Left lung (tissue), 14 donors: ENCODE measurements at regions of chr17 and their contacts with region 1.

Region 1: DNA sequence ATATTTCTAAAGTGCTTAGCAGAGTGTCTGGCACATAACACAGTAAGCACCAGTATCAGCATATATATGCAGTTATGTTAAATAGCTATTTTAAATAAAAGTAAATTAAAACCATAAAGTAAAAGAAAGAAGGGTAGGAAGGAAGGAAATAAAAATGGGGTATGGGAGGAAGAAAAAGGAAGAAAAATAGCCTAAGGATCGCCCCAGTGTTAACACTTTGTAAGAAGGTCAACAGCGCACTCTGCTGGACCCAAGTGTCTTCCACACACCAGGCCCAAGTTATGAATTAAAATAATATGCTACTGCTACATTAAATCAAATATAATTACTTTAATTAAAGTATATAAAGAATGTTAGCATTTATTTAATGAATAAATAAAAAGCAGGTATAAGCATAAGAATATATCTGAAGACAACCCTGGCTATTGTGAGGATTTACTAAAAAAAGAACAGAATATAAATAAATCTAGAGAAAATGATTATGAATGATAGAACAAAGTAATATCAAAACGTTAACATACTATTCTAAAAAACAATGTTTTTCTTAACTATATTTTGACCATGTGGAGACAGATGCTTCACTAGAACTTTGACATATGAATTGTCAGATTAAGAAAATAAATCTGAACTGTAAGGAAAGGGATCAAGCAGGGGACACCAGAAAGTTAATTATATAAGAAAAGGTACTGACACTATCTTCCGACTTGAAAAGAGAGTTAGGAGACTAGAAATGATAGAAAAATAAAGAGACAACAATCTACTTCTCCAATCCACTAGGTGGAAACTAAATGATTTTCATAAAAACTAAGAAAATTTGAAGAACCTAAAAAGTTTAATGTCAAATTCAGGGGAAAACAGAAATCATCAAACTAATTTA is 25.9 kb downstream of the BRIP1 start:
- DNase-seq: peak in 3 of 4 donors; percentile 52 to 86 (median 69)
- ATAC-seq: peak; percentile 93
- H3K4me3 ChIP-seq: no peak overlapping the region
- H3K27ac ChIP-seq: no peak overlapping the region
- H3K4me1 ChIP-seq: no peaks in the 10 kb centered on the region
- H3K27me3 ChIP-seq: no peaks in the 10 kb centered on the region
- CTCF ChIP-seq: peak; percentile 73 to 76

Region 2: GRCh38 chr17:61634942-61635538 is 202.4 kb before region 1 on chr17:
- intact Hi-C with region 1: loop called in 1 of 2 experiments (anchors 5 kb)
- DNase-seq: no peak
- ATAC-seq: no peak
- H3K4me3 ChIP-seq: no peak overlapping the region
- H3K27ac ChIP-seq: no peak overlapping the region
- H3K4me1 ChIP-seq: no peaks in the 10 kb centered on the region
- H3K27me3 ChIP-seq: no peaks in the 10 kb centered on the region
- CTCF ChIP-seq: no peak